Activated CD4-positive, alpha-beta T cell treated with anti-CD3 and anti-CD28 coated beads, Interleukin-2, amount 10 ng/mL, durations not matched to agents 24 days and 14 days (primary cell): ENCODE measurements at regions of chrX and their contacts with region 1.

Region 1: GRCh38 chrX:136694431-136695087 is 46.6 kb downstream of the CD40LG start:
- DNase-seq: peak; percentile 77
- H3K4me3 Mint-ChIP-seq: peak overlapping the region; percentile 86
- H3K27ac Mint-ChIP-seq: peak overlapping the region; percentile 99
- H3K4me1 Mint-ChIP-seq: peaks cover 54% of the 10 kb centered on the region
- H3K27me3 Mint-ChIP-seq: no peaks in the 10 kb centered on the region

Region 2: DNA sequence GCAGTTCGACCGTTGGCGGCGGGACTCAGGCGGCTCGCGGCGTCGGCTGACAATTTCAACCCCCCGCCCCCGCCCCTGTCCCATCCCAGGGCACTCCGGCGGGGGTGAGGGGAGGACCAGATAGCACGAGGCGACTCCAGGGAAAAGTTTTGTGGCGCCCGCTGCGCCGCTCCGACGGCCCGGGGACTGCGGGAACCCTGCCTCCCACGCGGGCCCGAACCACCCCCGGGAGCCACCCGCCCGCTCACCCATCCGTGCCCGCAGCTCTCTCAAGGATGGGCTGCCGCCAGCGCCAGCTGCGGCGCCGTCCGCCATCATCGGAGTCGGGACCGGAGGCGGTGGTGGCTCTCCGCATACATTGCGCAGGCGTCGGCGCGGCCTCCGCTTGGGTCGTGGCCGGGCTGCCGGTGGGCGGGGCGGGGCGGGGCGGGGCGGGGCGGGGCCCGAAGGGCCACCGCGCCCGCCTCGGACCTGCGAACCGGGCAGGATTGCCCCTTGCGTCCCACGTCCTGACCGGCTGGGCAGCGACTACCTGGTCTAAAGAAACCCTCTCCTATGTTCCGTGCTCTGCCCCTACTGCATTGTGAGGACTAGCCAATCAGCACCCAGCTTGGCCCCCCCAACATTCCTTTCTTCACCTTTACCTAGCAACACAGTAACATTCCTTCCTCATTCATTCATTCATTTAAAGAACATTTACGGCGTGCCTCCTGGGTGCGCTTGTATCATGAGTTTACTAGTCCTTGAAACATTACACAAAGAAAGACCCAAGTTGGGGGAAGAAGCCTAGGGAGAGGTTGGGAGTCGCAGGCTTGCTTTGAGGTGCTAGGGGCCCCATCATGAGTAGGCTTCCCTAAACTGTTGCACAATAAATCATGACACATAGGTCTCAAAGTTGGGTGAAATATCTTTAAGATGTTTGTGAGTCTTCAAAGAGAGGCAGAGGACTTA is 443.2 kb before region 1 on chrX and contains the start of gene MAP7D3:
- intact Hi-C with region 1: loop called (anchors 10 kb)
- DNase-seq: peak; percentile 90
- H3K4me3 Mint-ChIP-seq: peak within 1 kb of the TSS; percentile 92
- H3K27ac Mint-ChIP-seq: peak within 1 kb of the TSS; percentile 92
- H3K4me1 Mint-ChIP-seq: peaks cover 15% of the 10 kb centered on the region
- H3K27me3 Mint-ChIP-seq: no peaks in the 10 kb centered on the region
- total RNA-seq, gene MAP7D3: 24.5 and 26.7 TPM in 2 replicates

Region 3: GRCh38 chrX:136555694-136556093 is 138.9 kb before region 1 on chrX:
- intact Hi-C with region 1: no loop called
- DNase-seq: no peak
- H3K4me3 Mint-ChIP-seq: no peak overlapping the region
- H3K27ac Mint-ChIP-seq: no peak overlapping the region
- H3K4me1 Mint-ChIP-seq: no peaks in the 10 kb centered on the region
- H3K27me3 Mint-ChIP-seq: peaks cover 8% of the 10 kb centered on the region

Region 4: GRCh38 chrX:136572030-136572429 is 122.5 kb before region 1 on chrX:
- intact Hi-C with region 1: loop called (anchors 1 kb)
- DNase-seq: no peak
- H3K4me3 Mint-ChIP-seq: no peak overlapping the region
- H3K27ac Mint-ChIP-seq: no peak overlapping the region
- H3K4me1 Mint-ChIP-seq: peaks cover 14% of the 10 kb centered on the region
- H3K27me3 Mint-ChIP-seq: no peaks in the 10 kb centered on the region

Region 5: GRCh38 chrX:136577552-136577951 is 117.0 kb before region 1 on chrX:
- intact Hi-C with region 1: loop called (anchors 1 kb)
- DNase-seq: peak; percentile 90
- H3K4me3 Mint-ChIP-seq: peak overlapping the region; percentile 59
- H3K27ac Mint-ChIP-seq: peak overlapping the region; percentile 81
- H3K4me1 Mint-ChIP-seq: peaks cover 25% of the 10 kb centered on the region
- H3K27me3 Mint-ChIP-seq: no peaks in the 10 kb centered on the region

Region 6: GRCh38 chrX:136608295-136609171 is 86.0 kb before region 1 on chrX:
- intact Hi-C with region 1: loop called (anchors 1 kb)
- DNase-seq: peak; percentile 82
- H3K4me3 Mint-ChIP-seq: peak overlapping the region; percentile 35
- H3K27ac Mint-ChIP-seq: peak overlapping the region; percentile 56
- H3K4me1 Mint-ChIP-seq: peaks cover 30% of the 10 kb centered on the region
- H3K27me3 Mint-ChIP-seq: no peaks in the 10 kb centered on the region

Region 7: DNA sequence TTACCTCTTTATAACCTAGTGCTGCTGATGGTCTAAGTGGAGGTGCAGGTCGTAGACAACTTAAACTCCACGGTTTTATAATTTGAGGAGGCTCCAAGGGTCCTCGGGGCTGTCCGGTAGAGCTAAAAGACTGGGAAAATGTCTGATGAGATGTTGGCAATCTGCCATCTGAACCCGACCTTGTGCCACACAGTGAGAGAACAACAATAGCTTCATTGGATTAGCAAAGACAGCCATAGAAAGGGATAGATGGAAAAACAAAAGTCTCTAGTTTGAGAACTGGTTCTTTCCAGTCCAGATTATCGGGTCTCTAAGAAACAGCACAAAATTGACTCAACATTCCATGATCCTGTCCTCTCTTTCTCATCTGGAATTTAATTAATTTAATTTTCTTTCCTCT is 15.0 kb before region 1 on chrX:
- intact Hi-C with region 1: no loop called
- DNase-seq: no peak
- H3K4me3 Mint-ChIP-seq: no peak overlapping the region
- H3K27ac Mint-ChIP-seq: no peak overlapping the region
- H3K4me1 Mint-ChIP-seq: peaks cover 27% of the 10 kb centered on the region
- H3K27me3 Mint-ChIP-seq: no peaks in the 10 kb centered on the region

Region 8: DNA sequence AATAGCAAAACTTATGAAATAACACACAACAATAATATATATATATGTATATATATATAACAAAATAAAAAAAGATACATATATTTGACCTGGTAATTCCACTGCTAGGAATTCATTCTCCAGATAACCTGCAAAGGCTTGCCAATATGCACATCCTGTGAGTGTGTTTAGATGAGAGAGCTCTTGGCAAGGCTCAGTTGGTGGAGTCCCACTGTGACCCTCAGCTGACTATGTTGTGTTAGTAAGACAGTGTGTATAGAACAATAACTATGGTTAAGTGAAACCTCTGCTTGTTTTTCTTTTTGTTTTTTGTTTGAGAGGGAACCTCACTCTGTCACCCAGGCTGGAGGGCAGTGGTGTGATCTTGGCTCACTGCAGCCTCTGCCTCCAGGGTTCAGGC is 225.4 kb after region 1 on chrX:
- intact Hi-C with region 1: loop called (anchors 1 kb)
- DNase-seq: no peak
- H3K4me3 Mint-ChIP-seq: no peak overlapping the region
- H3K27ac Mint-ChIP-seq: no peak overlapping the region
- H3K4me1 Mint-ChIP-seq: peaks cover 1% of the 10 kb centered on the region
- H3K27me3 Mint-ChIP-seq: no peaks in the 10 kb centered on the region